Tibial artery (tissue), 4 donors: ENCODE measurements at regions of chr18 and their contacts with region 1.

Region 1: DNA sequence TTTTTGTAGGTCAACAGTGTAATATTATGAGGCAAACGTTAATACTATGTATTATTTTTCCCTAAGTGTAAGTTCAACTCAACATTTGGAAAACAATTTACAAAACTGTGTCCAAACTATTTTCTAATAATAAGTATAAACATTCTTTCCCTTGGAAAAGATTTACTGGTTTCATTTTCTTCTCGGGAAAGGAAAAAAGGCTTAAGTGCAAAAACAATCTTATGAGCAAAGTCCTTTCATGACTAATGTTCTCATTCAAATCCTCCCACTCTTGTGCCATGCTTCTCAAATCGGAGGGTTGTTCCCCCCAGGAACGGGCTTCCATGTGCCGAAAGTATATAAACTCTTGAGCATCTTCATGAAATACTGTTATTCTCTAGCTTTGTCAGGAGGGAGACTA is 19.8 kb upstream of the L3MBTL4 start:
- DNase-seq: no peak
- H3K4me3 ChIP-seq: peak overlapping the region in 1 of 2 donors; percentile 14
- H3K27ac ChIP-seq: no peak overlapping the region
- H3K4me1 ChIP-seq: peaks cover 0 to 5% (median 0%) of the 10 kb centered on the region in 4 donors
- H3K27me3 ChIP-seq: no peaks in the 10 kb centered on the region
- CTCF ChIP-seq: no peak

Region 2: GRCh38 chr18:6370886-6371635 is 63.4 kb before region 1 on chr18:
- intact Hi-C with region 1: loop called (anchors 10 kb)
- DNase-seq: no peak
- H3K4me3 ChIP-seq: no peak overlapping the region
- H3K27ac ChIP-seq: no peak overlapping the region
- H3K4me1 ChIP-seq: peaks cover 0 to 8% (median 0%) of the 10 kb centered on the region in 4 donors
- H3K27me3 ChIP-seq: no peaks in the 10 kb centered on the region
- CTCF ChIP-seq: no peak

Region 3: DNA sequence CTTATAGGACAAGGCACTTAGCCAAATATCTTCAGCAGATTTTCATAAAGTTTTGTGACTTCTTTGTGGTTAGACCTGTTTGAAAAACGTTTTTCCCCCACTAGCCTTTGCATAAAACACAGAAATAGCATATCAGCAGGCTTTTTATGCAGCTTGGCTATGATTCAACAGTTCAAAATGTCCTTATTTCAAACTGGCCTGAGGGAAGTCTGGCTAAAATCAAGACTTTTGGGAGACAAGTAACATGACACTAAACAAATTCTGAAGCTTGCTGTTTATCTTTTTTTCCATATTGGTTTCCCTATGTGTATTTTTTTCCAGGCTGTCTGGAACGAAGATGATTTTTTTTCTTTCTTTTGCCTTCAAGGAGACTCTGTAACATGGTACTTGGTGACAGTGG is 75.4 kb after region 1 on chr18:
- intact Hi-C with region 1: no loop called
- DNase-seq: no peak
- H3K4me3 ChIP-seq: no peak overlapping the region
- H3K27ac ChIP-seq: no peak overlapping the region
- H3K4me1 ChIP-seq: no peaks in the 10 kb centered on the region
- H3K27me3 ChIP-seq: peaks cover 0 to 2% of the 10 kb centered on the region in 2 donors
- CTCF ChIP-seq: no peak